ENCODE measurements at regions of chr1 and their contacts with region 1.

Region 1: GRCh38 chr1:178768423-178768822 is 43.4 kb downstream of the RALGPS2 start:
- DNase-seq: peak; percentile 58 to 64 (median 62)
- ATAC-seq: peak; percentile 88
- H3K4me3 ChIP-seq: no peak overlapping the region
- H3K27ac ChIP-seq: no peak overlapping the region
- H3K4me1 ChIP-seq: no peaks in the 10 kb centered on the region
- H3K27me3 ChIP-seq: no peaks in the 10 kb centered on the region
- CTCF ChIP-seq: peak; percentile 78 to 93 (median 93)
- EP300 ChIP-seq: no peak
- POLR2A ChIP-seq: no peak
- RAD21 ChIP-seq: peak; percentile 74 to 81

Region 2: DNA sequence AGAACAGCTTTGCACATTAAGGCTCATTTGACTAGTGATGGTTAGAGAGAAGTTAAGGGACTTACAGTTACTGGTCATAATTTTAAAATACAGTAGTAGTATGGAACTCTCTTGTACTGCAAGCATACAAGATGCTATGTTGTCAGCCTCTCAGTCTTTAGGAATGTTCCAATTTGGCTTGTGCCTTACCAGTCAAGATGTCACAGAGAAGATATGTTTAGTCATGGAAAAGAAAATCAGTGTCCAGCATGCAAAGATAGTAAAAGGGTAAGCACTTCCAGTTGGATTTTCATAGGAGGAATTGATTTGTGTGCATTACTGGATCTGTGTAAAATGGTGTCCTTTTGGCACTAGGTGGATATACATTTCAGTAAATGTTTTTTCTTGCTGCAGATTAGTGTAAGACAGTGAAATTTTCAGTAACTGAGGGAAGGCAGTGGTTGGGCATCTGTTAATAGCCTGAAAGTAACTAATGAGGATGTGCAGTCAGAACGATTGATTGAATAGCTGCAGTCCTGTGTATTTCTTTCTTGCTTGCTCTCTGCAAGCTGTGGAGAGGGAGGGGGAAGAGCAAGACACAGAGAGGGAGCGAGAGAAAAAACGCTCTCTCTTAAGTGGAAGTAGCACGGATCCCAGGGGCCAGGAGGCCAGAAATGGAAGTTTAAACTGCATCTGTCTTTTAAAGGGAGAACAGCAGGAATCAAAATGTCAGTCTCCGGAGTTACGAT is 379.8 kb before region 1 on chr1:
- CTCF ChIA-PET with region 1: no interaction called
- POLR2A ChIA-PET with region 1: no interaction called
- in situ Hi-C with region 1: no loop called
- intact Hi-C with region 1: no loop called
- DNase-seq: no peak
- ATAC-seq: no peak
- H3K4me3 ChIP-seq: no peak overlapping the region
- H3K27ac ChIP-seq: no peak overlapping the region
- H3K4me1 ChIP-seq: no peaks in the 10 kb centered on the region
- H3K27me3 ChIP-seq: no peaks in the 10 kb centered on the region
- CTCF ChIP-seq: no peak
- EP300 ChIP-seq: no peak
- POLR2A ChIP-seq: no peak
- RAD21 ChIP-seq: no peak

Region 3: DNA sequence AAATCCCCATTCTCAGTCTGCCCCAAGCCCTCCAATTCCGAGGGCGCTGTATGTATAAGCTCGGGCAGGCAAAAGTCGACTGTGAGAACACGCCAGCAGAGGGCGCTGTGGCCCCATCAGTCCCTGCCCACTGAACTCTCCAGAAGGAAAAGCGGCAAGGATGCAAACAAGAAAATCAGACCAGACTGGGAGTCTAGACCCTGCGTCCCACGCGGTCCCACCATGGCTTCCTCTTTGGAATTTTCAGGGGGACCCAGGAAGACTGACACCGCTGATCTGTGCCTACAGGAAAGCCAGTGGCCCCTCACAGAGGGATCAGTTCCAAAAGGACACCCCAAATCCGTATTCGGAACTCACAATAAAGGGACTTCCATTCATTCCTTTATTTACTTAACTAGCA is 236.0 kb before region 1 on chr1:
- CTCF ChIA-PET with region 1: no interaction called
- POLR2A ChIA-PET with region 1: no interaction called
- in situ Hi-C with region 1: loop called (anchors 5 kb)
- intact Hi-C with region 1: no loop called
- DNase-seq: peak; percentile 84 to 89 (median 87)
- ATAC-seq: peak; percentile 98
- H3K4me3 ChIP-seq: no peak overlapping the region
- H3K27ac ChIP-seq: no peak overlapping the region
- H3K4me1 ChIP-seq: no peaks in the 10 kb centered on the region
- H3K27me3 ChIP-seq: peaks cover 4 to 38% of the 10 kb centered on the region in 2 experiments; a peak in 4 of 5 replicates
- CTCF ChIP-seq: peak; percentile 90 to 97 (median 92)
- EP300 ChIP-seq: no peak
- POLR2A ChIP-seq: no peak
- RAD21 ChIP-seq: peak; percentile 81 to 89

Region 4: DNA sequence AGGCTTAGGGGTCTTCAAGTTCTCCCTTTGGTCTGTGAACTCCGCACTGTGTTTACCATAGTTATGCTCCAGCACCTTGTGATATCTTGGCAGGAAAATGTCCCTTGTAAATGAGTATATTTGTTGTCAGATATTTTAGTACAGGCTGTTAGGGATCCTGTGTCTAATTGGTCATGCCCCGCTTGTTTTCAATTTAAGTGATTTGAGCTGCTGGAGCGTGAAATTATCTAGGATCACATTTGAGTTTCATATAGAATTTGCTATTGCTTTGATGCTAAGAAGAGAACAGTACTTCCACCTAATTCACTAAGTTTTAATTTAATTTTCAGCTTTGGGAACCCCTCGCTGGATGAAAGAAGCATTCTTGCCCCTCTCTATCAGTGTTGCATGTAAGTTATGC is 298.0 kb after region 1 on chr1:
- CTCF ChIA-PET with region 1: no interaction called
- POLR2A ChIA-PET with region 1: no interaction called
- in situ Hi-C with region 1: no loop called
- intact Hi-C with region 1: loop called (anchors 5 kb)
- DNase-seq: no peak
- ATAC-seq: no peak
- H3K4me3 ChIP-seq: no peak overlapping the region
- H3K27ac ChIP-seq: no peak overlapping the region
- H3K4me1 ChIP-seq: peaks cover 1 to 3% of the 10 kb centered on the region in 2 experiments
- H3K27me3 ChIP-seq: no peaks in the 10 kb centered on the region
- CTCF ChIP-seq: no peak
- EP300 ChIP-seq: no peak
- POLR2A ChIP-seq: no peak
- RAD21 ChIP-seq: no peak

Measured in K562 (cell line).